Activated T-helper 1 cell treated with anti-CD3 and anti-CD28 coated beads, Interleukin-12 subunit alpha, Interleukin-12 subunit beta, Interleukin-2, Interleukin-4 antibody, amounts not matched to agents 30 ng/mL and 10 ng/mL and 1 ng/mL, durations not matched to agents 14 hours and 24 hours and 36 hours (primary cell): ENCODE measurements at regions of chr3 and their contacts with region 1.

Region 1: DNA sequence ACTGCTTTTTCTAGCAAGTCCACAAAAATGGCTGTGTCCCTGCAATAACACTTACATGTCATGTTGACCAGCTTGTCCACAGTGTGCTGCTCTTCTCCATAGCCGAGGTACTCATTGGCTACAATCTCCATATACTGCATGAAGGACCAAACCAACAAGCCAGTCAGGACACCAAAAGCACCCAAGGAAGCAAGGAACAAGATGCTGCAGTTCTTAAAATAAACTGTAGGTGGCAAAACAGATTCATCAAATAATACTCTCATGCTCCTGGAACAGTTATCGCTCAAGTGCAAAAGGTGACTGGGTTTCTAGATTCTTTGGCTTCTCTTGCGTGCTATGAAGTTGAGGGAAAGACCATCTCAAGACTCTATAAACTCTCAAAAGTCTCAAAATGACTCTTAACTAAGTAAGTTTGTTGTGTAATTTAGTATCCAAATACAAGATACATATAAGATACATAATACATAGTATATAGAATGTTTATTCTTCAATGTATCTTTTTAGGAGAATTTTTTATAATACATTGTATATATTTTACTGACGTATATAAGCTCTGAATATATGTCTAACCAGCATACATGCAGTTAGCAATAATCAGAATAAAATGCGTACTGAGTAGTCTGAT is 57.0 kb downstream of the NEK10 start:
- DNase-seq: no peak
- H3K4me3 Mint-ChIP-seq: no peak overlapping the region
- H3K27ac Mint-ChIP-seq: no peak overlapping the region
- H3K4me1 Mint-ChIP-seq: no peaks in the 10 kb centered on the region
- H3K27me3 Mint-ChIP-seq: peaks cover 13% of the 10 kb centered on the region

Region 2: DNA sequence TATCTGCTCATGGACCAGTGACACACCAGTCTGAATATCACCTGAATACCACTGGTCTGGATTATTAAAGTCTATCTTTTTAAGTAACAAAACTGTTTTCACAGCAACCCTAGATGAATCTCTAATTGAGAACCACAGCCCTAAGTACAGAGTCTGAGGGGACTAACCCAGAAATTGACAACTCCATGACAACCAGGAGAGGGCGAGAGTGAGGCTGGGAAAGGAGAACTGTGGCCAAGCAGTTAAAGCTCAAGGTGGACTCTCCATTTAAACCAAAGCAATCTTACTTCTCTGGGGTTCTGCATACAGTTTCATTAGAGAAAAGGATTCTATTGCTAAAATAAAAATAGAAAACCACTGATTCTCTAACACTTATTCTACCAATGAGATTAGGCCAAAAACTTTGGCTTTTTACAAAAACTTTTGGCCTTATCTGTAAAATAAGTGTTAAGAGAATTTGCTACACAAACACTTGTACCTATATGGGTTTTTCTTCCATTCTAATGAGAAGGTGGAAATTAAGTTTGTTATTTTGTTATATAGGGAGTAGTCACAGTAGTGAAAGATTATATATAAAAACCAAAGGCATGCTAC is 45.6 kb after region 1 on chr3:
- intact Hi-C with region 1: loop called (anchors 5 kb)
- DNase-seq: peak; percentile 35
- H3K4me3 Mint-ChIP-seq: no peak overlapping the region
- H3K27ac Mint-ChIP-seq: no peak overlapping the region
- H3K4me1 Mint-ChIP-seq: peaks cover 24% of the 10 kb centered on the region
- H3K27me3 Mint-ChIP-seq: peaks cover 16% of the 10 kb centered on the region

Region 3: GRCh38 chr3:27467545-27467944 is 155.4 kb after region 1 on chr3:
- intact Hi-C with region 1: loop called (anchors 1 kb)
- DNase-seq: no peak
- H3K4me3 Mint-ChIP-seq: no peak overlapping the region
- H3K27ac Mint-ChIP-seq: no peak overlapping the region
- H3K4me1 Mint-ChIP-seq: peaks cover 8% of the 10 kb centered on the region
- H3K27me3 Mint-ChIP-seq: no peaks in the 10 kb centered on the region

Region 4: DNA sequence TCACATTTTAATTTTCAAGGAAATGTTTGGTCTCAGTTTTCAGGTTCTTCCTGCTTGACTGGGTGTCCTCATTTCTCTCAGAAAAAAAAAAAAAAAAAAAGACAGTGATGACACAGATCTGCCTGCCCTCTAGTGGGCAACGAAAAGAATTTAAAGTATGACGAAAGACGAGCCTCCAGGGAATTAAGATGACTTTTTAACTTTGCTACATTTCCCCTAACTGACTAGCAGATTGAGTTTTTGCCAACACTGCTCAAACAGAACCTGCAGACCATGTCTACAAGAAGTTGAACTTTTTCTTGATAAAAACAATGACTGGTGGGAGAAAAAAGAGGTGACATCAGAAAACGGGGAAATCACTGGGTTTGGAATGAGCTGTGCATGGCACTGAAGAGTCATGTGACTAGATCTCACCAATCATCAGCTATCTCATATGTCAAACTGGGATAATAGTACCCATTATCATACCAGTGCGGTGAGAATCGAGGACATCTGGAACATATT is 369.1 kb after region 1 on chr3:
- intact Hi-C with region 1: loop called (anchors 1 kb)
- DNase-seq: no peak
- H3K4me3 Mint-ChIP-seq: peak overlapping the region; percentile 41
- H3K27ac Mint-ChIP-seq: peak overlapping the region; percentile 67
- H3K4me1 Mint-ChIP-seq: peaks cover 10% of the 10 kb centered on the region
- H3K27me3 Mint-ChIP-seq: peaks cover 5% of the 10 kb centered on the region

Region 5: DNA sequence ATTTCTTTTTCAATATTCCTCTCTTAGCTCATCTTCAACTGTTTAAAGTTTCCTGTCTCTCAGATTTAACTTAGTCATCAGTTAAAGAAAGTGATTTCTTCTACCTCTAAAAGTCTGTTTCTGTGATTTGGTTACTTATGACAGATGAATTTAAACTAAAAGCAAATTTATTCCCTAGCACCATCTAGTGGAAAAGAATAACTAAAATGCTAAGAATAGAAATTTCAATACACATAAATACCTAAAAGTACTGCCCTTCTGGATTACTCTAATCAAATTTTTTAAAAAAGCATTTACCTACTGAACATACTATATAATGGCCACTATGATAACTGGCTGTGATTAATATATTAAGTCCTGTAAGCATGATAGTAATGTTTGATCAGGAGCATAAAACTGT is 1022.4 kb after region 1 on chr3:
- intact Hi-C with region 1: loop called (anchors 5 kb)
- DNase-seq: no peak
- H3K4me3 Mint-ChIP-seq: no peak overlapping the region
- H3K27ac Mint-ChIP-seq: no peak overlapping the region
- H3K4me1 Mint-ChIP-seq: peaks cover 14% of the 10 kb centered on the region
- H3K27me3 Mint-ChIP-seq: peaks cover 1% of the 10 kb centered on the region